CD14-positive monocyte (primary cell): ENCODE measurements at regions of chr1 and their contacts with region 1.

Region 1: GRCh38 chr1:169893494-169894362 is at the start of gene SCYL3:
- DNase-seq: peak; percentile 94 to 98 (median 97)
- H3K4me3 ChIP-seq: peak within 1 kb of the TSS; percentile 78 to 89 (median 87)
- H3K4me3 Mint-ChIP-seq: peak within 1 kb of the TSS; percentile 87 to 97
- H3K27ac ChIP-seq: peak within 1 kb of the TSS; percentile 83 to 99
- H3K27ac Mint-ChIP-seq: peak within 1 kb of the TSS; percentile 99 to 100 (median 100)
- H3K4me1 ChIP-seq: peaks cover 16 to 38% of the 10 kb centered on the region in 2 donors
- H3K4me1 Mint-ChIP-seq: peaks cover 47% of the 10 kb centered on the region
- H3K27me3 ChIP-seq: peaks cover 0 to 2% of the 10 kb centered on the region in 2 donors
- H3K27me3 Mint-ChIP-seq: peaks cover 0 to 15% (median 4%) of the 10 kb centered on the region in 3 donors
- CTCF ChIP-seq: no peak
- polyA plus RNA-seq, gene SCYL3: 2.3 to 4.9 (median 3.6) TPM

Region 2: GRCh38 chr1:169367486-169368405 is 526.0 kb before region 1 on chr1 and contains the starts of genes BLZF1 and NME7:
- intact Hi-C with region 1: loop called in 1 of 2 experiments (anchors 10 kb)
- DNase-seq: peak; percentile 94 to 97 (median 96)
- H3K4me3 ChIP-seq: peak within 1 kb of the TSS; percentile 76 to 100 (median 84)
- H3K4me3 Mint-ChIP-seq: no peak within 1 kb of the TSS
- H3K27ac ChIP-seq: peak within 1 kb of the TSS; percentile 65 to 92
- H3K27ac Mint-ChIP-seq: peak within 1 kb of the TSS in 1 of 7 donors; percentile 20
- H3K4me1 ChIP-seq: peaks cover 7 to 18% of the 10 kb centered on the region in 2 donors
- H3K4me1 Mint-ChIP-seq: peaks cover 9% of the 10 kb centered on the region
- H3K27me3 ChIP-seq: no peaks in the 10 kb centered on the region
- H3K27me3 Mint-ChIP-seq: no peaks in the 10 kb centered on the region
- CTCF ChIP-seq: no peak
- polyA plus RNA-seq, gene BLZF1: 4.8 to 7.9 (median 5.5) TPM
- polyA plus RNA-seq, gene NME7: 3.5 to 8.0 (median 6.0) TPM

Region 3: DNA sequence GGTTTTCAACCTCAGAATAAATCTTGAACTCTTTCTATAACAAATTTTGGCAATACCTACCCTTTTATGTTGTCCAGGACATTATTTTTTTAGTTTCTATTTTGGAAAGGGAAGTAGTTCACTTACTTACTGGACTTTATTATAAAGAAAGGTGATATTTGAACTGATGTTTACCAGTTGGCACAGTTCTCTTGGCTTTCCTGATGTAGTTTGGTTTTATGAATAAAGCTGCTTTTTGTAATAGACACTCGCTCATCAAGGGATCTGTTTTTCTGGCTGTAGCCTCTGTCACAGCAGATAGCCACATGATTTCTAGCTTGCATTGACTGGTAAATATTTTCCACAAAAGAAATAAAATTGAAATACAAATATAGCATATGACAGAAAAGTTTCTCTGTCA is 58.1 kb before region 1 on chr1:
- intact Hi-C with region 1: no loop called
- DNase-seq: no peak
- H3K4me3 ChIP-seq: no peak overlapping the region
- H3K4me3 Mint-ChIP-seq: no peak overlapping the region
- H3K27ac ChIP-seq: peak overlapping the region in 1 of 2 donors; percentile 11
- H3K27ac Mint-ChIP-seq: no peak overlapping the region
- H3K4me1 ChIP-seq: no peaks in the 10 kb centered on the region
- H3K4me1 Mint-ChIP-seq: no peaks in the 10 kb centered on the region
- H3K27me3 ChIP-seq: no peaks in the 10 kb centered on the region
- H3K27me3 Mint-ChIP-seq: no peaks in the 10 kb centered on the region
- CTCF ChIP-seq: no peak

Region 4: DNA sequence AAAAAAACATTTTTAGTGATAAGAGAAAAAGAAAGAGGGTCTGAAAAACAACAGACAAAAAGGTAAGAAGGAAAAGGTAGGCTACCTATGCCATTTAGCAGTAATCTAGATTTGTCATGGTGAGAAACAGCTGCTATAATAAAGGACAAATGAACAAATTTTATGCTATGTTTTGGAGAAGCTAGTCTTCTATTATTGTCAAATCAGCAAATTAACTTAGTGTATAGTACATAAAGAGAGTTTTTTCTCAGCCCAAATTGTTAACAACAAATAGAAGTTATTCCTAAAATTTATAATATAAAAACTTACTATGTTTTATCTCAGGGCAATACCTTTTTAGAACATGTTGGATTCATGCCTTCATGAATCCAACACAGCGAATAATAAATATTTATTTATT is 92.0 kb after region 1 on chr1:
- intact Hi-C with region 1: no loop called
- DNase-seq: no peak
- H3K4me3 ChIP-seq: no peak overlapping the region
- H3K4me3 Mint-ChIP-seq: no peak overlapping the region
- H3K27ac ChIP-seq: no peak overlapping the region
- H3K27ac Mint-ChIP-seq: no peak overlapping the region
- H3K4me1 ChIP-seq: no peaks in the 10 kb centered on the region
- H3K4me1 Mint-ChIP-seq: no peaks in the 10 kb centered on the region
- H3K27me3 ChIP-seq: no peaks in the 10 kb centered on the region
- H3K27me3 Mint-ChIP-seq: no peaks in the 10 kb centered on the region
- CTCF ChIP-seq: no peak

Region 5: DNA sequence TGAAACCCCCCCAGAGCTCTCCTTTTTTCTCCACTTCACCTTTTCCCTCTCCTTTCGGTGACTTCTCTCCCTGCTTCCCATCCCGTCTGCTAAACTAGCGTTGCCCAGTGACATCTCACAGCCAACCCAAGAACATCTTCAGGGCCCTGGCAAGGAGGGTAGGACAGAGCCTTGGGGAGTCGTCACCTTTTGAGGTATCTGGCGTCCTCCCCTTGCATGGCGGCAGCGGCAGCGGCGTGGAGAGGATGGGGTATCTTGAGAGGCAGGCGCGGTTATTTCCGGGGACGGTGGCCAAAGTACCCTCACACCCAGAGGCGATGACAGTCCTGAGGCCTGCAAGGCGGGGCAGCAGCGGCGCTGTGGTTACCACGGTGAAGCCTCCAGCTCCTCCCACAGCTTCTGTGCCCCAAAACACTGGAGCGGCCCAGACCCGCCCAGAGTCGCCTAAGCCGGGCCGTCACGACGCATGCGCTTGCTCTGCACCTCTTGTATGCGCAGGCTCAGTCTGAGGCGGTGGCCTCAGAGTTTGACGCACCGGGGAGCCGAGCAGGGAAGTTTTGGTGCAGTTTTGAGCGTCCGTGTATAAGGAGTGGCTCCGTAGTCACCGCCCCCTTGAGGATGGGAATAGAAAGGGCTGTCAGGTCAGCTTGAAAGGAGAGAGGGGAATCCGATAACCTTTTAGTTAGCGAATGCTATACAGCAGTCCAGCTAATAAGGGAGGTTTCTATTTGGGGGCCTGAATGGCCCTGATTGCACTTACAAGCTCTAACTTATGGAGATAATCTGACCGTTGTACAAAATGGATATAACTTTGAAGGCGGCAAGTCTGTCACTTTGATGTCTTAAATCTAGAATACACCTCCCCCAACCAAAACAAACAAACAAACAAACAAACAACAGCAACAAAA is 180.8 kb after region 1 on chr1 and contains the start of gene KIFAP3:
- intact Hi-C with region 1: loop called (anchors 5 to 10 kb)
- DNase-seq: peak; percentile 97 to 98 (median 98)
- H3K4me3 ChIP-seq: peak within 1 kb of the TSS; percentile 55 to 92 (median 70)
- H3K4me3 Mint-ChIP-seq: peak within 1 kb of the TSS; percentile 90 to 92
- H3K27ac ChIP-seq: peak within 1 kb of the TSS; percentile 65 to 89
- H3K27ac Mint-ChIP-seq: peak within 1 kb of the TSS; percentile 88 to 96 (median 93)
- H3K4me1 ChIP-seq: peaks cover 11 to 18% of the 10 kb centered on the region in 2 donors
- H3K4me1 Mint-ChIP-seq: peaks cover 23% of the 10 kb centered on the region
- H3K27me3 ChIP-seq: no peaks in the 10 kb centered on the region
- H3K27me3 Mint-ChIP-seq: peaks cover 0 to 2% (median 0%) of the 10 kb centered on the region in 3 donors
- CTCF ChIP-seq: peak; percentile 57
- polyA plus RNA-seq, gene KIFAP3: 2.1 to 4.7 (median 2.2) TPM

Region 6: GRCh38 chr1:170531758-170532657 is 638.3 kb after region 1 on chr1 and contains the start of gene GORAB:
- intact Hi-C with region 1: loop called in 1 of 2 experiments (anchors 10 kb)
- DNase-seq: peak; percentile 85 to 93 (median 88)
- H3K4me3 ChIP-seq: peak within 1 kb of the TSS; percentile 72 to 93 (median 79)
- H3K4me3 Mint-ChIP-seq: no peak within 1 kb of the TSS
- H3K27ac ChIP-seq: peak within 1 kb of the TSS; percentile 90 to 94
- H3K27ac Mint-ChIP-seq: no peak within 1 kb of the TSS
- H3K4me1 ChIP-seq: peaks cover 15 to 19% of the 10 kb centered on the region in 2 donors
- H3K4me1 Mint-ChIP-seq: peaks cover 10% of the 10 kb centered on the region
- H3K27me3 ChIP-seq: peaks cover 2% of the 10 kb centered on the region in 2 donors
- H3K27me3 Mint-ChIP-seq: peaks cover 0 to 13% (median 3%) of the 10 kb centered on the region in 3 donors
- CTCF ChIP-seq: no peak
- polyA plus RNA-seq, gene GORAB: 0.86 to 17.5 (median 3.3) TPM